Calu3 (cell line): ENCODE measurements at regions of chr18 and their contacts with region 1.

Region 1: DNA sequence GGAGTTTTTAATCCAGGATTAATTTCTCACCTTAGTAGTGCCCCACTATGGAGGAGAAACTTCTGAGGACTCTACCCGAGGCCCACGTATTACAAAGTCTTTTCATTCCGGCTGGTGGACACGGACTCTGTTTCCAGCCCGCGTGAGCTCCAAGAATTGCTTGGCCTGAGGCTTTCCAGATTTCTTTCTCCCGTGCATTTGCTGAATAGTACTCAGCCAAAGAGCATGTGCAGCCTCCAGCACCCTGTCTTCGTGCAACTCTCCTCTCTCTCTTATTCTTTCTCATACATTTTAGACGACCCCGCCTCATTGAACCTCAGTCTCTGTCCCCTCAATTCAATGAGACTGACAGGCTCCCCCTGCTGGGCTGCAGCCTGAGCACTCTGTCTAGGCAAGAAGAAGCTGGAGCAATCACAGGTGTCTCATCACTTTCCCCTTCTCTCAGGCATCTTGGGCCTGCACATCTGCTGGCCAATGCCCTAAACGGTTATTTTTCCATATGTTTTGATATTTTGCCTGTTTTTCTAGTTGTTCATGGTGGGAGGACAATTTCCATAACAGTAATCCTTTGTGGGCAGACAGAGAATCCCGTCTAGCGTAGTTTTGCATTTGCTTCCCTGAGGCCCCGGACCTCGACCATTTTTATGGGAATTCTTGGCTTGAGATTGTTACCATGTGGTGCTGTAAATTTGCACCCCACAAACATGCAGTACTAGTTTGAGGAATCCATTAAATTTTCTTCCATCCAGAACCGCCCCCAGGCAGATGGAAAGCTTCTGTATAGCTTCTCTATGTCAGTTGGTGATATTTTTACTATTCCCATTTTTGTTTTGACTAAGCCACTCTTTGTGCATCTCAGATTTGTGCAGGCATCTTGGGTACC is 50.1 kb upstream of the LPIN2 start:
- DNase-seq: peak; percentile 79
- H3K4me3 Mint-ChIP-seq: peak overlapping the region; percentile 17
- H3K27ac Mint-ChIP-seq: peak overlapping the region; percentile 33
- H3K4me1 Mint-ChIP-seq: peaks cover 9% of the 10 kb centered on the region
- H3K27me3 Mint-ChIP-seq: no peaks in the 10 kb centered on the region
- CTCF ChIP-seq: peak; percentile 92

Region 2: GRCh38 chr18:2935438-2936192 is 127.4 kb before region 1 on chr18:
- CTCF ChIA-PET with region 1: interaction called, 8 read pairs
- intact Hi-C with region 1: loop called (anchors 2 kb)
- DNase-seq: no peak
- H3K4me3 Mint-ChIP-seq: no peak overlapping the region
- H3K27ac Mint-ChIP-seq: no peak overlapping the region
- H3K4me1 Mint-ChIP-seq: peaks cover 17% of the 10 kb centered on the region
- H3K27me3 Mint-ChIP-seq: no peaks in the 10 kb centered on the region
- CTCF ChIP-seq: no peak

Region 3: GRCh38 chr18:2948038-2948437 is 115.0 kb before region 1 on chr18:
- CTCF ChIA-PET with region 1: no interaction called
- intact Hi-C with region 1: no loop called
- DNase-seq: peak; percentile 4
- H3K4me3 Mint-ChIP-seq: no peak overlapping the region
- H3K27ac Mint-ChIP-seq: no peak overlapping the region
- H3K4me1 Mint-ChIP-seq: no peaks in the 10 kb centered on the region
- H3K27me3 Mint-ChIP-seq: no peaks in the 10 kb centered on the region
- CTCF ChIP-seq: no peak

Region 4: GRCh38 chr18:2985628-2986027 is 77.4 kb before region 1 on chr18:
- CTCF ChIA-PET with region 1: interaction called, 17 read pairs
- intact Hi-C with region 1: no loop called
- DNase-seq: peak; percentile 34
- H3K4me3 Mint-ChIP-seq: no peak overlapping the region
- H3K27ac Mint-ChIP-seq: no peak overlapping the region
- H3K4me1 Mint-ChIP-seq: peaks cover 52% of the 10 kb centered on the region
- H3K27me3 Mint-ChIP-seq: no peaks in the 10 kb centered on the region
- CTCF ChIP-seq: peak; percentile 33

Region 5: DNA sequence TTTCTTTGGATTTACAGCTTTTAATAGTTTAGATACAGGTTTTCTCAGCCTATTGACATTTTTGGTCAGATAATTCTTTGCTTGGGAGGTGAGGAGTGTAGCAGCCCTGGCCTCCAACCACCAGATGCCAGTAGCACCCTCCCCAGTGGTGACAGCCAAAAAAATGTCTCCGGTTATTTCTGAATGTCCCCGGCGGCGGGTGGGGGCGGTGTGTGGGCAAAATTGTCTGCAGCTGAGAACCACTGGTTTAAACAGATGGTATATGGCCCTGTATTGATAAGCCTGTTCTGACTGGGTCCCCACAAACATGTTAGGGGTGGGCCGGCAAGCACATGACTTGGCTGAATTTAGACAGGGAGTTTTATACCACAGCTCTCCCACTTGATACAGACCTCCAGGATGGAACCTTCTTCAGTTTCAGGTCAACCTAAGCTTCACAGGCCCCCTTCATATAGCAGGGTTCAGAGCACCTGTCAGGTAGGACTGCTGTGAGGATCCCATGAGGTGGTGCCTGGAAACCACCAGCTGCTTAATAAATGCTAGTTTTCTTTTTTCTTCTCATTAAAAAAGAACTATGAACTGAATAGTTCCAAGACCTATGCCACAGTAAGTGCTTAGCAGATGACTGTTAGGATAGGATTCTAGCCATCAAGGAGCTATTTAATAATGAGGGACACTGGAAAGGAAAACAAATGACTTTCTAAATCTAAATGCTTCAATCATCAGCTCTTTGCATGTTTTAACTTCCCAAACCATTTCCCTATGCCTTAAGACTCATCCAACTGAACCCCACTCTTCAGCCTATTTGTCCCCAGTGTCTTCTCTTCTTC is 68.2 kb before region 1 on chr18:
- CTCF ChIA-PET with region 1: interaction called, 32 read pairs
- intact Hi-C with region 1: loop called (anchors 2 kb)
- DNase-seq: peak; percentile 62
- H3K4me3 Mint-ChIP-seq: no peak overlapping the region
- H3K27ac Mint-ChIP-seq: peak overlapping the region; percentile 51
- H3K4me1 Mint-ChIP-seq: peaks cover 20% of the 10 kb centered on the region
- H3K27me3 Mint-ChIP-seq: no peaks in the 10 kb centered on the region
- CTCF ChIP-seq: peak; percentile 60

Region 6: DNA sequence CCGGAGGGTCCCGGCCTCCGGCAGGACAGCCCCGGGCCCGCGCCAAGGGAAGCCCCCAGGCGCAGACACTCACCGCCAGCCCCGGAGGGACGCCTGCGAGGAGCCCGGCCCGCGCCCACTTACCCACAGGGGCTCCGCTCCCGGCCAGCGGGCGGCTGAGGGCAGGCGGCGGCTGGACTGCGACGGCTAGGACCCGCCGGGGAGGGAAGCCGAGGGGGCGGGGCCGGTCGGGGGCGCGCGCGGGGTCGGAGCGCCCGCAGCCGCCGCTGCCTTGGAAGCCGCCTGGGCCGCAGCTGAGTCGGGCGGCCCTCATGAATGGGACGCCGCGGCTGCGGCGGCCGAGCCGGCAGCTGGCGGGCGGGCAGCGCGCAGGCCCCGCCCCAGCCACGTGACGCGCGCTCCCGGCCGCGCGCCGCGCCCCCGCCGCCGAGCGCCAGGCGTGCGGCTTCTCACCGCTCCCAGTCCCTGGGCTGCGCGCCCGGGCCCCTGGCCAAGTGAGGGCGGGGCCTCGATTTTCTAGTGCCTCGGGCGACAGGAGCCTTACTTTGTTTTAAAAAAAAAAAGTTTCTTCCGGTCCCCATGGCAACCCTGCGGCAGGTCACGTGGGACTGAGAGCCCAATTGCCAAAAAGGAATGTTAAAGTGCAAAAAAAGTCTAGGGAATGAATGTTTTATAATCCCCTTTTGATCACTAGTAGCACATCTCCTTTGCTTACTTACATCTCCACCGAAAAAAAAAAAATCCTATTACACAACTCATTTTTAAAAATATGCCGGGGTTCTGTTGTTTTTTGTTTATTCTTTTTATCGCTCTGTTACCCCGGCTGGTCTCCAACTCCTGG is 49.9 kb before region 1 on chr18 and contains the start of gene LPIN2:
- CTCF ChIA-PET with region 1: interaction called, 5 read pairs
- intact Hi-C with region 1: loop called (anchors 5 kb)
- DNase-seq: peak; percentile 99
- H3K4me3 Mint-ChIP-seq: peak within 1 kb of the TSS; percentile 78
- H3K27ac Mint-ChIP-seq: peak within 1 kb of the TSS; percentile 86
- H3K4me1 Mint-ChIP-seq: peaks cover 50% of the 10 kb centered on the region
- H3K27me3 Mint-ChIP-seq: no peaks in the 10 kb centered on the region
- CTCF ChIP-seq: no peak
- total RNA-seq, gene LPIN2: 15.7 and 15.9 TPM in 2 replicates

Region 7: GRCh38 chr18:3660739-3661515 is 597.9 kb after region 1 on chr18:
- CTCF ChIA-PET with region 1: interaction called, 11 read pairs
- intact Hi-C with region 1: no loop called
- DNase-seq: no peak
- H3K4me3 Mint-ChIP-seq: no peak overlapping the region
- H3K27ac Mint-ChIP-seq: no peak overlapping the region
- H3K4me1 Mint-ChIP-seq: peaks cover 46% of the 10 kb centered on the region
- H3K27me3 Mint-ChIP-seq: no peaks in the 10 kb centered on the region
- CTCF ChIP-seq: no peak